Sciatic nerve (tissue), 2 donors: ENCODE measurements at regions of chr17 and their contacts with region 1.

Region 1: DNA sequence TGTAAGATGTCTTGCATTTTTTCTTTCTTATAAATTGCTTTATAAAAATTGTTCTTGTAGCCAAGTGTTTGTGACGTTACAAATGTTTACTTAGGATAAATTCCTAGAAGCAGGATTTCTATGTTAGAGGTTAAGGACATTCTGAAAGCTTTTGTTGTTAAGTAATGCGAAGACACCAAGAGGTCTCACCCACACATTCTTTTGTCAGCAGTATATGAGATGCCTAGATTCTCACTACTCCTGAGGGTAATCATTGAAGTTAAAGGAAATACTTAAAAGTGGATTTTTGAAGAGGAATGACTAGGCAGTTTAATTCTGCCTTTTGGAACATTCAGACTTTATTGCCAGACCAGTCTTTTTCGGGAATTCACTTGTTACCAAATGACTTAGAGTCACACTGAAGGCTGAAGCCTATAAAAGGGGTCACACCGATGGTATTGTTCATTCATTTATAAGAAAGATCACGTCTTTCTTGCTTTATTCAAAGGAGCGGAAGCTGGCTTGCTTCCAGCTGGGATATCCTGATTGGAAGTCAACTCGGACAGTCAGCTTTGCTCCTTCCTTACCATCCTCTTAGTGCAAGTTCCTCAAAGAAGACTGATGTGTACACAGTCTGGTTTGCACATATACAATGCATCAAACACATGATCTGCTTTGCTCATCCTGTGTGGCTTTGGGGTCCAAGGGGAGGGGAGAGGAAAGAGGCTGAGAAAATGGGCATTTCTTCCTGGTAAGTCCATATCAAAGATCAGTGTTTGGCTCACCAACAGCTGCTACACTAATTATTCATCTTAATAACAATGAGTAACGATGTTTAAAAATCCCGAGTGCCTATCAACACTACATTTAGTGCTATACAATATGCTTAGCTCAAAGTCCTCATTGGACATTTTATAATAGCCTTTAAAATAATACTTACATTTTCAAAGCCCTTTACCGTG is 160.0 kb downstream of the MAP2K6 start:
- DNase-seq: no peak
- ATAC-seq: peak; percentile 64

Region 2: DNA sequence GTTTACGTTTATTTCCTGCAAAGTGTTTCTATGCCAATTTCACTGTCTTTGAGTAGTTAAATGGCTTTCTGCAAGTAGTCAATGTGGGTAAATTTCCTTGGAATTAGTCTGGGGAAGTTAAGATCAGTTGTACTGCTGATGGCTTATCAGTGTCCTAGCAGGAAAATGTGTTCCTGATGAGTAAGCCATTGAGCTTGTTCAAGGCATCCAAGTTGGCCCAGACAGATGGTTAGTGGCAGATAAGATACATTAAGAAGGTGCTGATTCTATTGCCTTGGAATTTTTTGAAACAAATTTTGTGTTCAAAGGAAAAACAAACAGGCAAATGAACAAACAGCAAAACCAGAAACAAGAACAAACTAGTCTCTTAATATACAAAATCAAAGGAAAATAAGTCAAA is 98.4 kb after region 1 on chr17:
- intact Hi-C with region 1: no loop called
- DNase-seq: no peak
- ATAC-seq: no peak

Region 3: DNA sequence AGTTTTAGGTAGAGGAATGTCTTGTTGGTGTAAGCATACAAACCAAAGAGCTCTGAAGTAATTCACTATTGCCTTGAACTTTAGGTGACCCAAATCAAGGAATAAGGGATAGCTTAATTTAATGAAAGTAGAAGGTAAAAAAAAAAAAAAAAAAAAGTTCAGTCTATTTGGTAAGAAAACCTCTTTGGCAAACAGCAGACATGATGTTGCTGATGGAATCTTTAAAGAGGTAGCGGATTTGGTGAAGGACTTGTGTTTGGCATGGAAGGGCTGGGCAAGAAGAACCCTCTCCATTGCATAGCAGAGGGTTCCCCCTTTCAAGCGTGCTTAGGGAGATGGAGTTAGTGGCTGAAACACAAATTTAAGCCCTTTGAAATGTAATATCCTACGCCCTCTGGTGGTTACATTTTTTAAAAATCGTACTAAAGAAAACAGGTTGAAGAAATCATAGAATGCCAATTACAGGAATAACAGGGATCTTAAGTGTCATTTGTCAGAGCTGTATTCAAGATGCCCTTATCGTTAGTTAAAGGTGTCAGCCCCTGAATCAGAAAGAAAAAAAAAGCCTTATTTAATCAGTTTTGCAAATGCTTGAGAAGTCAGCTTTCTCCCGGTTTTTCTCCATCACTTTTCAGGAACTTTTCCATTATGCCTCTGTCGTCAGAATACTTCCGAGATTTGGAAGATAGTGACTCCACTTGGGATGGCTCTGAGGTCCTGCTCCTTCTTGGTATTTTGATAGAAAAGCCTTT is 977.9 kb after region 1 on chr17:
- intact Hi-C with region 1: loop called (anchors 5 kb)
- DNase-seq: no peak
- ATAC-seq: peak; percentile 78